RWPE1 (cell line): ENCODE measurements at regions of chr11 and their contacts with region 1.

Region 1: DNA sequence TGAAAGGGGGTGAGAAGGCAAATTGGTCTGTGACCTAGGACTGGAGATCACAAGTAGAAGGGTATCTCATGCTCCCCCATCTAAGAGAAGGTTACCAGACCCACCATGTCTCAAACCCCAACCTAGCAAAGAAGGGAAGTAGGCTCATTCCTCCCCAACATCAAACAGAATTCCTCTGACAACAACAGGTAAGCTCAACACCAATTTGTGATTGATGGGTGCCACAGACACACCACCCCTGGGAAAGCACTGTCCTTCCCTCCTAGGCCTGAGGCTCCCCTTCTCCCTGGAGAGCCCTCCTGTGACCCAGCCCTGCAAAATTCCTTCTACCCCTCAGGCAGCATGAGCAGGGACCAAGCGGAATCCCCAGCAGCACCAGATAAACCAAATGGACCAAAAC is 154.3 kb downstream of the BUD13 start:
- DNase-seq: no peak
- H3K27ac ChIP-seq: no peak overlapping the region
- CTCF ChIP-seq: no peak

Region 2: DNA sequence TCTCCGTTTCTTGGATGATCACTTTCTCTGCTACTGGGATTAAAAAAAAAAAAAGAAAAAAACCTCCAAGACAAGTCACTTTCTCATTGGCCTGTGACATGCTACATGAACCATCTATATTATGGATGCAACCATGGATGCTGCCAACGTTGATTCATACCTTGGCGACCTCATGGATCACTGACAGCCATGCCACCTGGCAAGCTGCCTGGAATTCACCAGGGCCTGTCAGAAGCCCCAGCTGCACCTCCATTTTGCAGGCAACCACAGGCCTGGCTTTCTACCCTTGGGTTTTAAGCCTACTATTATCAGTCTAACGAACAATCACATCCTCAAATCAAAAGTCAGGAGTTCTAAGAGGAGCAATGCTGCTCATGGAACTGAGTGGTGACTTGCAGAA is 1066.3 kb before region 1 on chr11:
- CTCF ChIA-PET with region 1: no interaction called
- POLR2A ChIA-PET with region 1: no interaction called
- DNase-seq: no peak
- H3K27ac ChIP-seq: no peak overlapping the region
- CTCF ChIP-seq: no peak

Region 3: DNA sequence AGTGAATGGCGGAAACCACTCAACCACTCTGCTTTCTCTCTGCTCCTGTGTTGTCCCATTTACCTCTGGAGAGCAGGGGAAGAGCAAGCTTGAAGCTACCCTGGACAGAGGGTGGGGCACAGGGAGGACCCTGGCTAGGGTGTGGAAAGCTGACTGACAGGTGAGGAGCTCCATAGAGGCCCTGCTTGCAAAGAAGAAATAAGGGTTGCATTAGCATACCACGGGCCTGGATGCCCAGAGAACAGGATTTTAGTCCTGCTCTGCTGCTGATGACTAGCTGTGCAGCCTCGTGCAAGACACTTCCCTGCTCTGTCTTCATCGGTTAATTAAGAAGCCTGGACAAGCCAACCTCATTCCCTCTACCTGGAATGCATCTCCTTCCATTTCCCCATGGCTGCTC is 19.3 kb after region 1 on chr11:
- CTCF ChIA-PET with region 1: interaction called, 3 read pairs
- POLR2A ChIA-PET with region 1: interaction called, 10 read pairs
- DNase-seq: no peak
- H3K27ac ChIP-seq: no peak overlapping the region
- CTCF ChIP-seq: no peak